Heart right ventricle (tissue), 16 donors: ENCODE measurements at regions of chr2 and their contacts with region 1.

Region 1: DNA sequence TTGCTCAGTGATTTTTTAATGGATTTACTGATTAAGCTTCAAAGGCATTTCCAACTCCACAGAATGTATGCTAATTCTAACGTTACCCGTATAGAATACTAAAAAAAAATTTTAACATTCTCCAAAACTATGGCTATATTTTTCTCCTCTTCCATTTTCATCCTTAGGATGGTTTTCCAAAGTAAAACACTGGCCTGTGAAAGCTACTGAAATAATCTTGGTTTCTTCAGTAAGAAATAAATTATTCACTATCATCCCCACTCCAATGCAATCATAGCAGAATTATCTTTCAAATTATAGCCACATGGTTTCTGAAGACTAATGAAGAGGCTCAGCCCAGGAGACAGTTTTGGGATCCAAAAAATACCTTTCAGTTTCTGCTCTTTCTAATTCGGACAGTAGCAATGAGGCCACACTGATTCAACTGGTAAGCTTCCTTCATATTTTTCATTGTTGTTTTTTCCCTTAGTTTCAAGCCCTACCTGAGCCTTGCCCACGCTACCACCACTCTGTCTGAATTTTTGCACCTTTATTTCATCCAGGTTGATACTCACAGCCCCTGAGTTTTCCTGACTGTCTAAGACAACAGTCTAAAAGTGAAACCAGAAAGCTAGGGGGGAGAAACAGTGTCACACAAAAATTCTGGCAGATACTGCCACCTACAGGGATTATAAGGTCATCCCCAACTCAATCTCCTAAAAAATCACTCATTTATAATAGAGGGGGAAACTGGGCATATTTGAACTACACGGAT is 887.9 kb downstream of the NRXN1 start:
- DNase-seq: peak in 1 of 2 donors; percentile 5
- ATAC-seq: peak; percentile 51 to 92 (median 74)
- H3K4me3 ChIP-seq: peak overlapping the region in 8 of 10 donors; percentile 7 to 47 (median 36)
- H3K27ac ChIP-seq: peak overlapping the region in 3 of 10 donors; percentile 10 to 51 (median 35)
- H3K4me1 ChIP-seq: peaks cover 0 to 7% (median 0%) of the 10 kb centered on the region in 9 donors
- H3K27me3 ChIP-seq: no peaks in the 10 kb centered on the region
- CTCF ChIP-seq: peak; percentile 12 to 74 (median 60)

Region 2: GRCh38 chr2:49687918-49688317 is 456.1 kb before region 1 on chr2:
- intact Hi-C with region 1: loop called in 9 of 10 experiments (anchors 1 to 10 kb)
- DNase-seq: no peak
- ATAC-seq: no peak
- H3K4me3 ChIP-seq: no peak overlapping the region
- H3K27ac ChIP-seq: no peak overlapping the region
- H3K4me1 ChIP-seq: no peaks in the 10 kb centered on the region
- H3K27me3 ChIP-seq: no peaks in the 10 kb centered on the region
- CTCF ChIP-seq: peak in 8 of 9 donors; percentile 21 to 56 (median 44)

Region 3: DNA sequence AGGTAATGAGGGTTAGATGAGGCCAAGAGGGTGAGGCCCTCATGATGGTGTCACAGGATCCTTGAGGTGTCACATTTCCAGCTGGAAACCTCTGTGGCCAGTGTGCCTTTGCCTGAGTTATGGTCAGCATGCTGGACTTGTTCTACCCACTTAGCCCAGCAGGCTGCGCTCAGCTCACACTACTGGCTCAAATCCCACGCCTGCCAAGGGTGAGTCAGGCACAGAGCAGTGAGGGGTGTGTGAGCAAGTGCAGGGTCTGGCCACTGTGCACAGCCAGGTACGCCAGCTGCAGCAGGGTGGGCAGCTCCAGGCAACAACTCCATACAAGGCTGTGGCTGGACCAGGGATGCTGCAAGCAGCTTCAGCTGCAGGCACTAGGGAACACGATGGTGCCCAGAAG is 373.1 kb before region 1 on chr2:
- intact Hi-C with region 1: loop called in 7 of 10 experiments (anchors 2 to 5 kb)
- DNase-seq: peak; percentile 17 to 22
- ATAC-seq: peak; percentile 12 to 91 (median 74)
- H3K4me3 ChIP-seq: no peak overlapping the region
- H3K27ac ChIP-seq: no peak overlapping the region
- H3K4me1 ChIP-seq: no peaks in the 10 kb centered on the region
- H3K27me3 ChIP-seq: no peaks in the 10 kb centered on the region
- CTCF ChIP-seq: peak in 8 of 9 donors; percentile 4 to 55 (median 44)

Region 4: DNA sequence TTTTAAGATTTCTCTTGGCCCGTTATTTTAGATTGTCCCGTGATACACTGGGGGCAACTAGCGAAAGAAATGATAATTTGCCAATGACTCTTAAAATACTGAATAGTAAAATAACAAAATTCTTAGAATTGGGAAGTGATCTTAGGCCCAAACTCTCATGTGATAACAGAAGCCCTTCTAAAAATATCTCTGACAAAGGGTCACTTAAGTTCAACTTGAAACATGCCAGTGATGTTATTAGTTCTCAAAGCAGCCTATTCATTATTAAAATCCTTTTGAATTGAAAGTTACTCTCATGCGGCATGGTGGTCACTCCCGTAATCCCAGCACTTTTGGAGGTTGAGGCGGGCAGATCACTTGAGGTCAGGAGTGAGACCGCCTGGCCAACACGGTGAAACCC is 32.9 kb before region 1 on chr2:
- intact Hi-C with region 1: no loop called
- DNase-seq: no peak
- ATAC-seq: no peak
- H3K4me3 ChIP-seq: no peak overlapping the region
- H3K27ac ChIP-seq: no peak overlapping the region
- H3K4me1 ChIP-seq: peaks cover 0 to 9% (median 0%) of the 10 kb centered on the region in 9 donors
- H3K27me3 ChIP-seq: no peaks in the 10 kb centered on the region
- CTCF ChIP-seq: no peak